K562 (cell line): ENCODE measurements at regions of chr18 and their contacts with region 1.

Region 1: DNA sequence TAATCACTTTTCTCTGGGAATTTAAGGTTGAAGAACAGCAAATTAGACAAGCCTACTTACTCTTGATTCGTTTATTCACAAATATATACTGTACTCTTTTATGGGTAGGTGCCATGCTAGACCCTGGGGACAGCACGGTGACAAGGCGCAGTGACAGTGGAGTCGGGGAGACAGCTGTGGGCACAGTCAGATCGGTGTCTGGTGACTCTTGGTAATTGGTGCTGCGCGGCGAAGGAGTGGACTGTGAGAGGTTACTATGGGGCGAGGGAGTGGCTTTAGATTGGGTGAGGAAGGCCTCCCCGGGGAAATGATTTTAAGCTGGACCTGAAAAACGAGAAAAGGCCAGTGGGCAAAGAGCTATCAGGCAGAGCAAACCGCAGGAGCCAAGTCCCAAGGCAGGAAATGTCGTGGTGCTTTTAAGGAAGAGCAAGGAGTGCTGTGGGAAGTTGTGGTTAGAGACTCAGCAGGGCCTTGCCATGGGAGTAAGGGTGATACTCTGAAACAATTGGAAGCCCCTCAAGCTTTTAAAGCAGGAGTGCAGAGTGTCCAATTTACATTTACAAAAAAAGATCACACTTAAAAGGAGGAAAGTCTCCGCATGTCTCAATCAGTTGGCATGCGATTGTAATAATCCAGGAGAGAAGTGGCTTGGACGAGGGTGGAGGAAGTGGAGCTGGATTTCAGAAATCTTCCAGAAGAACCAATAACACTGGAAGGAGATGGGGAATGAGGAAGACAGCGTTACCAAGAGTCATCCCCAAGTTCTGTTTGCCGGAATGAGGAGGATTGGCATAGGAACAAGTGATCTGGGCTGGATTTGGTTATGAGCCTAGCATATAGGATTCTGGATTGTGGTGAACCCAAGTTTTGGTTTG is 36.1 kb upstream of the TXNDC2 start:
- DNase-seq: peak; percentile 51 to 90 (median 69)
- ATAC-seq: peak; percentile 96
- H3K4me3 ChIP-seq: no peak overlapping the region
- H3K27ac ChIP-seq: peak overlapping the region; percentile 68
- H3K4me1 ChIP-seq: peaks cover 11 to 46% of the 10 kb centered on the region in 2 experiments
- H3K27me3 ChIP-seq: no peaks in the 10 kb centered on the region
- CTCF ChIP-seq: no peak
- EP300 ChIP-seq: no peak
- POLR2A ChIP-seq: 0 out of 2 replicates have a peak, but pooled peaks have one; percentile 41
- RAD21 ChIP-seq: peak in 1 of 2 experiments; percentile 31; a peak in 3 of 4 replicates

Region 2: GRCh38 chr18:9861157-9861556 is 11.5 kb after region 1 on chr18:
- CTCF ChIA-PET with region 1: no interaction called
- POLR2A ChIA-PET with region 1: interaction called, 19 read pairs
- in situ Hi-C with region 1: no loop called
- intact Hi-C with region 1: no loop called
- DNase-seq: no peak
- ATAC-seq: no peak
- H3K4me3 ChIP-seq: no peak overlapping the region
- H3K27ac ChIP-seq: no peak overlapping the region
- H3K4me1 ChIP-seq: peaks cover 3 to 9% of the 10 kb centered on the region in 2 experiments; a peak in 4 of 5 replicates
- H3K27me3 ChIP-seq: no peaks in the 10 kb centered on the region
- CTCF ChIP-seq: no peak
- EP300 ChIP-seq: no peak
- POLR2A ChIP-seq: no peak
- RAD21 ChIP-seq: no peak

Region 3: GRCh38 chr18:9869715-9870430 is 20.2 kb after region 1 on chr18:
- CTCF ChIA-PET with region 1: no interaction called
- POLR2A ChIA-PET with region 1: interaction called, 14 read pairs
- in situ Hi-C with region 1: no loop called
- intact Hi-C with region 1: no loop called
- DNase-seq: peak; percentile 83 to 97 (median 89)
- ATAC-seq: peak; percentile 89
- H3K4me3 ChIP-seq: no peak overlapping the region
- H3K27ac ChIP-seq: peak overlapping the region; percentile 92
- H3K4me1 ChIP-seq: peaks cover 23 to 67% of the 10 kb centered on the region in 2 experiments
- H3K27me3 ChIP-seq: no peaks in the 10 kb centered on the region
- CTCF ChIP-seq: no peak
- EP300 ChIP-seq: peak; percentile 99
- POLR2A ChIP-seq: peak; percentile 42; the same call in 1 of the 2 replicates
- RAD21 ChIP-seq: peak in 1 of 2 experiments; percentile 47; a peak in 3 of 4 replicates